A549 (cell line): ENCODE measurements at regions of chr19 and their contacts with region 1.

Region 1: GRCh38 chr19:46890423-46891170 is 29.8 kb downstream of the ARHGAP35 start:
- DNase-seq: peak; percentile 64 to 87
- ATAC-seq: peak; percentile 91 to 96
- H3K4me3 ChIP-seq: 0 out of 3 replicates have a peak overlapping the region, but pooled peaks have one; percentile 7
- H3K27ac ChIP-seq: peak overlapping the region; percentile 69 to 83
- H3K4me1 ChIP-seq: peaks cover 69% of the 10 kb centered on the region
- CTCF ChIP-seq: no peak
- EP300 ChIP-seq: no peak
- POLR2A ChIP-seq: no peak
- RAD21 ChIP-seq: peak; percentile 36 to 41; a peak in 3 of 5 replicates

Region 2: GRCh38 chr19:46950526-46951170 is 60.1 kb after region 1 on chr19:
- CTCF ChIA-PET with region 1: no interaction called
- POLR2A ChIA-PET with region 1: no interaction called
- DNase-seq: no peak
- ATAC-seq: peak; percentile 26 to 33; a peak in 5 of 6 replicates
- H3K4me3 ChIP-seq: 0 out of 3 replicates have a peak overlapping the region, but pooled peaks have one; percentile 15
- H3K27ac ChIP-seq: peak overlapping the region; percentile 78 to 80
- H3K4me1 ChIP-seq: peaks cover 56% of the 10 kb centered on the region
- CTCF ChIP-seq: no peak
- EP300 ChIP-seq: no peak
- POLR2A ChIP-seq: no peak
- RAD21 ChIP-seq: no peak

Region 3: DNA sequence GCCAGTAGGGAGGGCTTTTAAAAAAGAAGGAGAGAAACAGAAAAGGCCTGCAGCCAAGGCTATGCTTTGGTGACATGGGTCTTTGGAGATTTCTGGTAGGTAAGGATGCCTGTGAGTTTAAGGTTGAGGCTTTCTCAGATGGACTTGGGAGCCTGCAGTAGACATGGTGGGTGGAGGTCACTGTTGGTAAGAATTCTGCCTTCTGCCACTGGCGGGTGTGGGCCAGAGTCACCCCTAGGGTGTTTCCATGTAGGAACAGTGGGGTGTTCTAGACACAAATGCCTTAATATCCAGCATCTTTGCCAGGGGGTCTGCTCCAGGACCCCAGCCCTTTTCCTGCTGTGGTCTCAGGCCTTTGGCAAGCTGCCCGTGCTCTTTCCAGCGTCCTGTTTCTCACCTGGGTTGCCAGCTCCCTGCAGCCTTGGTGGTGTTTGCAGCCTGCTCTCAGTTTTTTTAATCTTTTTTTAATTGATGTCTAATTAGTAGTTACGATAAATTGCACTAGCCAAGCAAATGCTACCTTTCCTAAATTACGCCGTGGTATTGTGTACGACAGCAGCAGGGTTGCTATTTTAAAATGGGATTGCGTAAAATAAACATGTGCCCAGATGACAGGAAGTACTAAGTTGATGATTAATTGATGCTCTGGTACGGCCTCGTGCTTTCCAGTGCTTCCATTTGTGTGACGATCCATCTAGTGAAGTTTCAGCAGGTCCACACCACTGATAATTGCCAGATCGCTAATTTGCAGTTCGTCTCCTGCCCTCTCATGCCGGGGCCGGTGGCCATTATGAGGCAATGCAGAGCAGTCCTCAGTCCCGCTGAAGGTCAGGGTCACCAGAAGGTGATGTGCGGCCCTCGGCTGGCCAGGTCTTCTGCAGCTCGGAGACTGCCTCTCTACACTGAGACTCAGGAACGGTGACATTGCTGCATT is 93.7 kb after region 1 on chr19:
- CTCF ChIA-PET with region 1: interaction called, 3 read pairs
- POLR2A ChIA-PET with region 1: interaction called, 13 read pairs
- DNase-seq: peak; percentile 59 to 81
- ATAC-seq: peak; percentile 71 to 79
- H3K4me3 ChIP-seq: peak overlapping the region; percentile 19; the same call in 2 of the 3 replicates
- H3K27ac ChIP-seq: peak overlapping the region; percentile 63 to 75
- H3K4me1 ChIP-seq: peaks cover 39% of the 10 kb centered on the region
- CTCF ChIP-seq: no peak; the same call in 2 of the 3 replicates
- EP300 ChIP-seq: no peak
- POLR2A ChIP-seq: no peak
- RAD21 ChIP-seq: no peak